ENCODE measurements at regions of chr10 and their contacts with region 1.

Region 1: DNA sequence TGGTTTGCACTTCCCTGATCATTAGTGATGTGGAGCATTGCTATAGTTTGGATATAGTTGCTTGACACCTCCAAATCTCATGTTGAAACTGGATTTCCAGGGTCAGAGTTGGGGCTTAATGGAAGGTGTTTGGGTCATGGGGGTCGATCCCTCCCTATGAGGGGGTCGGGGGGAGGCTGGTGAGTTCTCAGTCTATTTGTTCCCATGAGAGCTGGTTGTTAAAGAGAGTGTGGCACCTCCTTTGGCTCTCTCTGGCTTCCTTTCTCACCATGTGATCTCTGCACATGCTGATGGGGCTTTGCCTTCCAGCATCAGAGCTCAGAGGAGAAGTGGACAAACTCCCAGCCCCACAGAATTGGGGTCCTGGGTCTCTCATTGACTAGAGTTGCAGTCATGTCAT is 36.8 kb upstream of the BAMBI start:
- DNase-seq: no peak
- H3K4me3 Mint-ChIP-seq: no peak overlapping the region
- H3K27ac Mint-ChIP-seq: no peak overlapping the region
- H3K4me1 Mint-ChIP-seq: no peaks in the 10 kb centered on the region
- H3K27me3 Mint-ChIP-seq: peaks cover 3% of the 10 kb centered on the region

Region 2: GRCh38 chr10:28628184-28628893 is 12.2 kb before region 1 on chr10:
- CTCF ChIA-PET with region 1: interaction called, 11 read pairs
- POLR2A ChIA-PET with region 1: no interaction called
- DNase-seq: peak; percentile 72
- H3K4me3 Mint-ChIP-seq: no peak overlapping the region
- H3K27ac Mint-ChIP-seq: no peak overlapping the region
- H3K4me1 Mint-ChIP-seq: peaks cover 2% of the 10 kb centered on the region
- H3K27me3 Mint-ChIP-seq: peaks cover 17% of the 10 kb centered on the region

Measured in activated CD4-positive, alpha-beta memory T cell treated with anti-CD3 and anti-CD28 coated beads, Interleukin-2, amount 10 ng/mL, durations not matched to agents 7 days and 5 days (primary cell).